Activated CD8-positive, alpha-beta T cell treated with anti-CD3 and anti-CD28 coated beads for 36 hours (primary cell): ENCODE measurements at regions of chr1 and their contacts with region 1.

Region 1: GRCh38 chr1:100459358-100460114 is 78.4 kb upstream of the GPR88 start:
- DNase-seq: peak; percentile 88
- ATAC-seq: peak; percentile 83
- H3K4me3 Mint-ChIP-seq: no peak overlapping the region
- H3K27ac Mint-ChIP-seq: peak overlapping the region; percentile 67
- H3K4me1 Mint-ChIP-seq: peaks cover 35% of the 10 kb centered on the region
- H3K27me3 Mint-ChIP-seq: no peaks in the 10 kb centered on the region
- CTCF ChIP-seq: peak; percentile 83

Region 2: GRCh38 chr1:99956755-99957154 is 502.8 kb before region 1 on chr1:
- CTCF ChIA-PET with region 1: no interaction called
- POLR2A ChIA-PET with region 1: no interaction called
- intact Hi-C with region 1: no loop called
- DNase-seq: no peak
- ATAC-seq: no peak
- H3K4me3 Mint-ChIP-seq: no peak overlapping the region
- H3K27ac Mint-ChIP-seq: no peak overlapping the region
- H3K4me1 Mint-ChIP-seq: no peaks in the 10 kb centered on the region
- H3K27me3 Mint-ChIP-seq: no peaks in the 10 kb centered on the region
- CTCF ChIP-seq: no peak

Region 3: DNA sequence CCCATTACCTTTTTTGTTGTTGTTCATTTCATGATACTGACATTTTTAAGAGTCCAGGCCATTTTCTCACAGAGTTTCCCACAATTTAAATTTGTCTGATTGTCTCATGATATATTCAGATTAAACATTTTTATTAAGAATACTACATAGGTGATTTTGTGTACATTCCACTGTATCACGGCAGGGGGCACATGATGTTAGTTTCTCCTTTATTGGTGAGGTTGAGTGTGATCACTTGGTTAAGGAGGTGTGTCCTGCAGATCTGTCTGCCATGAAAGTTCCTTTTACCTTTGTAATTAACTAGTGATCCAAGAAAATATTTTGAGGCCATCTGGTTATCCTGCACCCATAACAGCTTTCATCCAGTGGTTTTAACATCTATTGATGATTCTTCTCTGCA is 181.7 kb before region 1 on chr1:
- CTCF ChIA-PET with region 1: interaction called, 12 read pairs
- POLR2A ChIA-PET with region 1: no interaction called
- intact Hi-C with region 1: loop called (anchors 10 kb)
- DNase-seq: peak; percentile 39
- ATAC-seq: peak; percentile 53
- H3K4me3 Mint-ChIP-seq: no peak overlapping the region
- H3K27ac Mint-ChIP-seq: peak overlapping the region; percentile 31
- H3K4me1 Mint-ChIP-seq: peaks cover 15% of the 10 kb centered on the region
- H3K27me3 Mint-ChIP-seq: no peaks in the 10 kb centered on the region
- CTCF ChIP-seq: no peak

Region 4: GRCh38 chr1:100423832-100424337 is 35.7 kb before region 1 on chr1:
- CTCF ChIA-PET with region 1: interaction called, 12 read pairs
- POLR2A ChIA-PET with region 1: no interaction called
- intact Hi-C with region 1: no loop called
- DNase-seq: peak; percentile 13
- ATAC-seq: peak; percentile 67
- H3K4me3 Mint-ChIP-seq: peak overlapping the region; percentile 51
- H3K27ac Mint-ChIP-seq: peak overlapping the region; percentile 86
- H3K4me1 Mint-ChIP-seq: peaks cover 61% of the 10 kb centered on the region
- H3K27me3 Mint-ChIP-seq: no peaks in the 10 kb centered on the region
- CTCF ChIP-seq: no peak

Region 5: DNA sequence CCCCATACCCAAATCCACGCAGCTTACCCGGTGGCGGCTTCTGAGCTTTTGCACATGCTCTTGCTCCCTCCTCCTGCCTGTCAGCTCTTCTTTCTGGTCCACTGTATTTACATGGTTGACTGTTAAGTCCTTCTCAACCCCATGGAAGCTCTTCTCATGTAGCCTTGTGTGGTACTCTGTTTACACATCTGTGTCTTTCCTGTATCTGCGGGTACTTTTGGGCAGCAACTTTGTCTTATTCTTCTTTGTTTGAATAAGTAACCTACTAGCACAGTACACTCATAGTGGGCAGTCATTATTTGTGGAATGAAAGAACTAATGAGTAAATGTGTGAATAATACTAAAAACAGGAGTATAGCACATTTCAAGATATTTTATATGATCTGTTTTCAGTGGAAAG is 10.1 kb before region 1 on chr1:
- CTCF ChIA-PET with region 1: interaction called, 27 read pairs
- POLR2A ChIA-PET with region 1: interaction called, 5 read pairs
- intact Hi-C with region 1: no loop called
- DNase-seq: peak; percentile 17
- ATAC-seq: peak; percentile 60
- H3K4me3 Mint-ChIP-seq: peak overlapping the region; percentile 55
- H3K27ac Mint-ChIP-seq: peak overlapping the region; percentile 84
- H3K4me1 Mint-ChIP-seq: peaks cover 78% of the 10 kb centered on the region
- H3K27me3 Mint-ChIP-seq: no peaks in the 10 kb centered on the region
- CTCF ChIP-seq: no peak

Region 6: GRCh38 chr1:100506217-100506616 is 46.7 kb after region 1 on chr1:
- CTCF ChIA-PET with region 1: no interaction called
- POLR2A ChIA-PET with region 1: no interaction called
- intact Hi-C with region 1: no loop called
- DNase-seq: no peak
- ATAC-seq: no peak
- H3K4me3 Mint-ChIP-seq: no peak overlapping the region
- H3K27ac Mint-ChIP-seq: no peak overlapping the region
- H3K4me1 Mint-ChIP-seq: peaks cover 3% of the 10 kb centered on the region
- H3K27me3 Mint-ChIP-seq: no peaks in the 10 kb centered on the region
- CTCF ChIP-seq: no peak

Region 7: DNA sequence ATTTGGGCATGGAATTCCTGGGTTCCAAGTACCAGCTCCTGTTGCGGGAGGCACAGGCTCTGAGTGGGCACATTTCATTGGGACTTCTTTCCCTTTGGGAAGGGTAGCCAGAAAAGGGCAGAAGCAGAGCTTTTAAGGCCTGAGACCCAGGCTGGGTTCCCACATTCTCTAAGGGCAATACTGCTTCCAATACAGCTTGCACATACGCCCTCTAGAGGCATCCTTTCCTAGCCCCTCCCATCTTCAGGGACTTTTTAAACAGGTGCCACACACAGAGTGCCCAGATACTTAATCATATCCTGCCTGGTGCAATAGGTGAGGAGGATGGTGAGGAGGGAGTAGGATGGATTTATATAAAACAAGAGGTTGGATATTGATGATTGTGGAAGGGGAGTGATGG is 84.1 kb after region 1 on chr1:
- CTCF ChIA-PET with region 1: interaction called, 19 read pairs
- POLR2A ChIA-PET with region 1: no interaction called
- intact Hi-C with region 1: loop called (anchors 5 kb)
- DNase-seq: peak; percentile 74
- ATAC-seq: peak; percentile 83
- H3K4me3 Mint-ChIP-seq: no peak overlapping the region
- H3K27ac Mint-ChIP-seq: no peak overlapping the region
- H3K4me1 Mint-ChIP-seq: peaks cover 6% of the 10 kb centered on the region
- H3K27me3 Mint-ChIP-seq: peaks cover 32% of the 10 kb centered on the region
- CTCF ChIP-seq: peak; percentile 60